ENCODE measurements at regions of chr14 and their contacts with region 1.

Region 1: GRCh38 chr14:65302571-65303189 is 109.8 kb upstream of the FUT8 start:
- DNase-seq: peak; percentile 86
- ATAC-seq: peak; percentile 81
- H3K4me3 Mint-ChIP-seq: peak overlapping the region; percentile 44
- H3K27ac Mint-ChIP-seq: peak overlapping the region; percentile 78
- H3K4me1 Mint-ChIP-seq: peaks cover 81% of the 10 kb centered on the region
- H3K27me3 Mint-ChIP-seq: no peaks in the 10 kb centered on the region

Region 2: GRCh38 chr14:65336191-65336591 is 33.5 kb after region 1 on chr14:
- CTCF ChIA-PET with region 1: interaction called, 42 read pairs
- POLR2A ChIA-PET with region 1: interaction called, 49 read pairs
- DNase-seq: peak; percentile 76
- ATAC-seq: peak; percentile 91
- H3K4me3 Mint-ChIP-seq: peak overlapping the region; percentile 74
- H3K27ac Mint-ChIP-seq: peak overlapping the region; percentile 93
- H3K4me1 Mint-ChIP-seq: peaks cover 73% of the 10 kb centered on the region
- H3K27me3 Mint-ChIP-seq: no peaks in the 10 kb centered on the region

Region 3: DNA sequence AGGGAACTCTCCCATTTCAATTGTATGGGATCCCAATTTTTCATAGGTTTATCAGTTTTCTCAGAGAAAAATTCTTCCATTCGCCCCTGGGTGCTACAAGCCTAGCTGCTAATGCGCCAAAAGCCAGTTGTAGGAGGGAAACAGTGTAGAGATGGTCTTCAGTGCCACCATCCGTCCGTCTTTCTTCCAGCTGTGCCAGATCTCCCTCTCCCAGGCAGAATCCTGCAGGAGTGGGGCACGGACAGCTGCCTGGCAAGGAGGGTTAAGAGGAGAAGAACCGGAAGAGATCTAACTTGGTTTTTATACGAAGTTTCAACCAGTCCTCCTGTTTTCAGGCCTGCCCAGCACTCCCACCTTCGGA is 71.0 kb after region 1 on chr14:
- CTCF ChIA-PET with region 1: no interaction called
- POLR2A ChIA-PET with region 1: no interaction called
- DNase-seq: no peak
- ATAC-seq: no peak
- H3K4me3 Mint-ChIP-seq: no peak overlapping the region
- H3K27ac Mint-ChIP-seq: peak overlapping the region; percentile 58
- H3K4me1 Mint-ChIP-seq: peaks cover 46% of the 10 kb centered on the region
- H3K27me3 Mint-ChIP-seq: no peaks in the 10 kb centered on the region

Measured in activated CD8-positive, alpha-beta T cell treated with anti-CD3 and anti-CD28 coated beads, Interleukin-2, amount 10 ng/mL, durations not matched to agents 7 days and 5 days (primary cell).